ENCODE measurements at regions of chr3 and their contacts with region 1.

Region 1: DNA sequence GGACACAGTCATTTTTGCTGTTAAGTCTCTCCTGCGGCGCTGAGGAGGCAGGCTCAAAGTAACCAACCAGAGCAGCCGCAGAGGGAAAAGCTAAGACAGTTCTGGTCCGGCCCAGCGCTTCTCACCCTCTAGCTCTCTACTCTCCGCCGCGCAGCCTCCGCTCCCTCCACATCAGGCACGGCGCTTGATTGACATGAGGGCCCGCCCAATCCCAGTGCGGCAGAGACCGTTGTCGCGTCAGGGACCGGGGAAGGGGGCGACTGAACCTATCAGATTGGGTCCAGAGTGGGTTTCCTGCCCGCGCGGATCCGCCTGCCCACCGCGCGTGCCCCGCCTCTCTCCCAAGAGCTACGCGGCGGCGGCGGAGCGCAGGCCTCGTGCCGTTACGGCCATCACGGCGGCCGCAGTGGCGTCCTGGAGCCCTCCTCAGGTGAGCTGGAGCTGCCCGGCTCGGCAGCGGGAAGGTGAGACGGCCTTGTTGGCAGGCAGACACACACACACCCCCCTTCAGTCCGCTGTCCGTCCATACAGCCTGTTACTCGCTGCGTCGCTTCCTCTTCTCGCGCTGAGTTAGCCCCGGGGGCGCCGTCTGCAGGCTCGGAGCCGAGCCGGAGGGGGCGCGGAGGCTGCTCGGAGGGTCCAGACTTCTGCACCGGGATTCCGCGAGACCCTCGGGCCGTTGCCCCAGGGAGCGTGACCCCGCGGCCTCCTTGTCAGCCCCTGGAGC is at the start of gene NCK1:
- DNase-seq: peak; percentile 98
- H3K4me3 Mint-ChIP-seq: peak within 1 kb of the TSS; percentile 97
- H3K27ac Mint-ChIP-seq: peak within 1 kb of the TSS; percentile 99
- H3K4me1 Mint-ChIP-seq: peaks cover 55% of the 10 kb centered on the region
- H3K27me3 Mint-ChIP-seq: no peaks in the 10 kb centered on the region
- total RNA-seq, gene NCK1: 33.2 and 33.4 TPM in 2 replicates

Region 2: DNA sequence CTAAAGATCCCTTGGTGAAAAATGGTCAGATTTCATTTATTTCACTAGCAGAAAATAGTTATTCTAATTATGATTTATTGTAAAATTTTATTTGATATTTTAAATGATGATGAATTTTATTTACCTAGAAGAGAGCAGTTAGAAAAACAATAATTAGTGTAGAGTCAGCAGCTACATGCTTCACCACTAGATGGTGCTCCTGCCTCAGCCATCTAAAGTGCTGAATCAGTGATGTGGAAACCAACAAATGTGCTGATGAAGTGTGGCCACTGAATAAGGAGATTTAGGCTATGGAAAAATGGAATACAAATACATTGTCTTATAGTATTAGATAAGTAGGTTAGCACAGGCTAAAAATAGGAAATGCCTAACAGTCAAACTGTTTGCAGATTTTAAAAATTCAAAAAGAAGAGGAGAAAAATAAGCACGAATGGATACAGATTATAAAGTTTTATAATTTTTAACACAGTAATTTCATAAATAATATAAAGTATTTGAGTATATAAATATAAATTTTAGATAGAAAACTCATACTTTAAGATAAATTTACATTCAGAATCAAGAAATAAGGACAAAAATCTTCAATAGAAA is 786.7 kb before region 1 on chr3:
- intact Hi-C with region 1: loop called (anchors 5 kb)
- DNase-seq: peak; percentile 47
- H3K4me3 Mint-ChIP-seq: no peak overlapping the region
- H3K27ac Mint-ChIP-seq: no peak overlapping the region
- H3K4me1 Mint-ChIP-seq: peaks cover 10% of the 10 kb centered on the region
- H3K27me3 Mint-ChIP-seq: peaks cover 6% of the 10 kb centered on the region

Region 3: DNA sequence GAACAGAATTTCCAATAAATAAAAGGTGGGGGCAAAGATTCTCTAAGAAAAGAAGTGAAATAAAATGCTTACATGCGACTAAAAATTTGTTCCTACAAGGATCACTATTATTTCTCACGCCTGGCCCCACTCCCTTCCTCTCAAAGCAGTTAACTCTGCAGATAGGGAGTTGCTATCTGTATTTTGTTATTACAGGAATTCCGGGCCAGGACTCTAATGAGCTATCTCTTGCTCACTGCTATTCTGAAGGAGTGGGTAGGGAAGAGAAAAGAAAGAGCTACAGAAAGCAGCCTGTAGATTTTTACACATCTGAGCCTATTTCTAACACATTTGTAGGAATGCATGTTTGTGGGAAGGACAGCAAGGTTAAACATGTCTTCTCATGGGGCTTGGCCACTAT is 471.5 kb before region 1 on chr3:
- intact Hi-C with region 1: loop called (anchors 5 kb)
- DNase-seq: no peak
- H3K4me3 Mint-ChIP-seq: no peak overlapping the region
- H3K27ac Mint-ChIP-seq: no peak overlapping the region
- H3K4me1 Mint-ChIP-seq: no peaks in the 10 kb centered on the region
- H3K27me3 Mint-ChIP-seq: no peaks in the 10 kb centered on the region

Region 4: GRCh38 chr3:136818769-136819391 is 43.2 kb before region 1 on chr3 and contains the start of gene SLC35G2:
- intact Hi-C with region 1: loop called (anchors 1 kb)
- DNase-seq: no peak
- H3K4me3 Mint-ChIP-seq: peak within 1 kb of the TSS; percentile 86
- H3K27ac Mint-ChIP-seq: peak within 1 kb of the TSS; percentile 74
- H3K4me1 Mint-ChIP-seq: peaks cover 27% of the 10 kb centered on the region
- H3K27me3 Mint-ChIP-seq: peaks cover 57% of the 10 kb centered on the region
- total RNA-seq, gene SLC35G2: 2.6 and 3.0 TPM in 2 replicates

Region 5: DNA sequence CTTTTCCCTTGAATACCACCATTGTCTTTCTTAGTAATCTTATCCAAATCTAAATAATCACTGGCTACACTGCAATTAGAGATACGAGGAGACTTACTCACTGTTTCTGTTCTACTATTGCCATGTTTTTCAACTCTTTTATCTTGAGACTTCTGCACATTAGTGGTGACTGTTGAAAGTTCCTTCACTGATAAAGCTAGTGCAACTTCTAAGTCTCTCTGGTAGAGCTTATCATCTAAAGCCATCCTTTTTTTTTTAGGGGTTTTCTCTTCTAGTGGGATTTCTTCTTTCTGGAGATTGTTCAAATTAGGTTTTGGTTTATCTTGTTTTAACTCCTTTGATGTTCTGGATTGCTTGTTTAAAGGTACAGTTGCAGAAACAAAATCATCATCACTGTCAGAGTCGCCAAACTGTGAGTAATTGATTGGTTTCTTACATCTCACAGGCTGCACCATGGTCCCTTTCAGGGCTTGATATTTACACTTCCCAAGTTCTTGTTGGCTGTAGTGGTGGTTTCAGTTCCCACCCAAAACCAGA is 37.6 kb after region 1 on chr3:
- intact Hi-C with region 1: loop called (anchors 5 kb)
- DNase-seq: no peak
- H3K4me3 Mint-ChIP-seq: no peak overlapping the region
- H3K27ac Mint-ChIP-seq: peak overlapping the region; percentile 63
- H3K4me1 Mint-ChIP-seq: peaks cover 41% of the 10 kb centered on the region
- H3K27me3 Mint-ChIP-seq: no peaks in the 10 kb centered on the region

Region 6: DNA sequence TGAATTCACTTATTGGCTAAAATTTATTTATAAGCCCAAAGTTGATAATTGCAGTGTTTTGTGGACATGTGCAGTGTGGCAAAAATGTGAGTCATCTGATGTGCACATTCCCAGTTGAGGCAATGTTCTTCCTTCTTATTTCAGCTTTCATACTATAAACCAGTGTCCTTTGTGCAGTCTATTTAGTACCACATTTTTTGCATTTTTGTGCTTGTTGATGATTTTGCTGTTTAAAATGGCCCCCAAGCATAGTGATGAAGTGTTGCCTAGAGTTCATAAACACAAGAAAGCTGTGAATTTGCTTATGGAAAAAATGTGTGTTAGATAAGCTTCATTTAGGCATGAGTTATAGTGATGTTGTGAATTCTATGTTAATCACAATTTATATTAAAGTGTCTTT is 76.3 kb after region 1 on chr3:
- intact Hi-C with region 1: loop called (anchors 5 kb)
- DNase-seq: no peak
- H3K4me3 Mint-ChIP-seq: no peak overlapping the region
- H3K27ac Mint-ChIP-seq: peak overlapping the region; percentile 31
- H3K4me1 Mint-ChIP-seq: peaks cover 76% of the 10 kb centered on the region
- H3K27me3 Mint-ChIP-seq: no peaks in the 10 kb centered on the region